A549 (cell line): ENCODE measurements at regions of chr12 and their contacts with region 1.

Region 1: DNA sequence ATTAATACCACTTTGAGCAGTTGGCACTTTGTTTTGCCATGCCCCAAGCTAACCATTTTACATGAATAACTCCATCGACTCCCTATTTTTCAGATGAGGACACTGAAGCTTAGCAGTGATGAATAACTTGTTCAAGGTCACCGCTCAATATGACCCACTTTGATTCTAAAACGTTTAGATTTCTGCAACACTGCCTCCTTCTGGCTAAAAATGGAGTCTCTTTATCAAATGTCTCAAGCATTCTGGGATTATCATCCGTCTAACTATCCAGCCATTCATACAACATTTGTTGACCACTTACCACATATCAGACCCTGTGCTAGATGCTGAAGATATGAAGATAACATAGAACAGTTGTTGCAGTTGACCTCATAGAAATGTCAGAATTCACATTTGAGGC is 298.0 kb downstream of the PPFIA2 start:
- DNase-seq: peak in 1 of 2 experiments; percentile 4
- ATAC-seq: no peak
- H3K4me3 ChIP-seq: no peak overlapping the region
- H3K27ac ChIP-seq: no peak overlapping the region
- H3K4me1 ChIP-seq: no peaks in the 10 kb centered on the region
- CTCF ChIP-seq: no peak
- EP300 ChIP-seq: no peak
- POLR2A ChIP-seq: no peak
- RAD21 ChIP-seq: no peak

Region 2: DNA sequence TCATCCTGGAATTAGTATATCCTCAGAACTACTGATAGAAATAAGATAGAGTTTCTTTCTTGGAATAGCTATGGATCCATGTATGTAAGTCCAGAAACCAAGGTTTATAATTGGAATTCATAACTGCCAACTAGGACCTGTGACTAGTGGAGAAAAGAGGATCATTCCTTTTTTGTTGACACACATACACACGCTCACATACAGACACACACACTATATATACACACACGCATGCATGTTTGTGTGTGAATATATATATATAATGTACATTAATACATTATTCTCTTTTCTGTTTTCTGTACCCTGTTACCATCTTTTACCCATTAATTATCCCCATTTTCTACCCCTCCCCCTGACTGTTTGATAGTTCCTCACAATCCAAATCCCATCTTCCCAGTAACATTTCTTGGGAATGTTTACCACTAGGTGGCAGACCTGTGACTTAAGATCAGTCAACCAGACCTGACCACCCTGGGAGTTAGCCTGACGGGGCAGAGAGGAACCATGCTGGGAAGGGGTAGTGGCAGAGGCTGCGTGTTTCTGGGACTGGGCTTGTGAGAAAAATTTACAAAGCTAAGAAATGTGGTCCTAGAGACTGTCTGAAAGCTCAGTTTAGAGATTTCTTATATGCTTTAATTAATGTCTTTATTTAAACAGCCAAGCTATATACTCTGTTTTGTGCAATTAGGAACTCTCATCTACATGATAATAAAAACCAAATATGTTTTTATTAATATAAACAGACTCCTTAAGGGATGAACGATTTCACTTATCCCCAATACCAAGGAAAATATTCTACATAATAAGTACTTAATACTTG is 10.0 kb before region 1 on chr12:
- CTCF ChIA-PET with region 1: interaction called, 10 read pairs
- POLR2A ChIA-PET with region 1: no interaction called
- DNase-seq: peak; percentile 15 to 79
- ATAC-seq: peak; percentile 95 to 98
- H3K4me3 ChIP-seq: no peak overlapping the region
- H3K27ac ChIP-seq: no peak overlapping the region
- H3K4me1 ChIP-seq: no peaks in the 10 kb centered on the region
- CTCF ChIP-seq: peak; percentile 60
- EP300 ChIP-seq: no peak
- POLR2A ChIP-seq: no peak
- RAD21 ChIP-seq: peak; percentile 38 to 58; a peak in 4 of 5 replicates

Region 3: GRCh38 chr12:81597928-81598604 is 136.9 kb after region 1 on chr12:
- CTCF ChIA-PET with region 1: no interaction called
- POLR2A ChIA-PET with region 1: no interaction called
- DNase-seq: no peak
- ATAC-seq: no peak
- H3K4me3 ChIP-seq: no peak overlapping the region
- H3K27ac ChIP-seq: no peak overlapping the region
- H3K4me1 ChIP-seq: no peaks in the 10 kb centered on the region
- CTCF ChIP-seq: no peak
- EP300 ChIP-seq: no peak
- POLR2A ChIP-seq: no peak
- RAD21 ChIP-seq: no peak